Activated CD4-positive, alpha-beta T cell treated with anti-CD3 and anti-CD28 coated beads, Interleukin-2, amount 10 ng/mL, durations not matched to agents 24 days and 14 days (primary cell): ENCODE measurements at regions of chr5 and their contacts with region 1.

Region 1: GRCh38 chr5:129767906-129768380 is 20.0 kb downstream of the MINAR2 start:
- DNase-seq: peak; percentile 88
- H3K4me3 Mint-ChIP-seq: no peak overlapping the region
- H3K27ac Mint-ChIP-seq: no peak overlapping the region
- H3K4me1 Mint-ChIP-seq: peaks cover 2% of the 10 kb centered on the region
- H3K27me3 Mint-ChIP-seq: peaks cover 2% of the 10 kb centered on the region

Region 2: GRCh38 chr5:129664337-129664937 is 103.5 kb before region 1 on chr5:
- intact Hi-C with region 1: loop called (anchors 1 kb)
- DNase-seq: peak; percentile 76
- H3K4me3 Mint-ChIP-seq: no peak overlapping the region
- H3K27ac Mint-ChIP-seq: no peak overlapping the region
- H3K4me1 Mint-ChIP-seq: no peaks in the 10 kb centered on the region
- H3K27me3 Mint-ChIP-seq: no peaks in the 10 kb centered on the region

Region 3: GRCh38 chr5:129852747-129853352 is 84.9 kb after region 1 on chr5:
- intact Hi-C with region 1: loop called (anchors 1 kb)
- DNase-seq: peak; percentile 89
- H3K4me3 Mint-ChIP-seq: no peak overlapping the region
- H3K27ac Mint-ChIP-seq: no peak overlapping the region
- H3K4me1 Mint-ChIP-seq: no peaks in the 10 kb centered on the region
- H3K27me3 Mint-ChIP-seq: no peaks in the 10 kb centered on the region